ENCODE measurements at regions of chr1 and their contacts with region 1.

Region 1: DNA sequence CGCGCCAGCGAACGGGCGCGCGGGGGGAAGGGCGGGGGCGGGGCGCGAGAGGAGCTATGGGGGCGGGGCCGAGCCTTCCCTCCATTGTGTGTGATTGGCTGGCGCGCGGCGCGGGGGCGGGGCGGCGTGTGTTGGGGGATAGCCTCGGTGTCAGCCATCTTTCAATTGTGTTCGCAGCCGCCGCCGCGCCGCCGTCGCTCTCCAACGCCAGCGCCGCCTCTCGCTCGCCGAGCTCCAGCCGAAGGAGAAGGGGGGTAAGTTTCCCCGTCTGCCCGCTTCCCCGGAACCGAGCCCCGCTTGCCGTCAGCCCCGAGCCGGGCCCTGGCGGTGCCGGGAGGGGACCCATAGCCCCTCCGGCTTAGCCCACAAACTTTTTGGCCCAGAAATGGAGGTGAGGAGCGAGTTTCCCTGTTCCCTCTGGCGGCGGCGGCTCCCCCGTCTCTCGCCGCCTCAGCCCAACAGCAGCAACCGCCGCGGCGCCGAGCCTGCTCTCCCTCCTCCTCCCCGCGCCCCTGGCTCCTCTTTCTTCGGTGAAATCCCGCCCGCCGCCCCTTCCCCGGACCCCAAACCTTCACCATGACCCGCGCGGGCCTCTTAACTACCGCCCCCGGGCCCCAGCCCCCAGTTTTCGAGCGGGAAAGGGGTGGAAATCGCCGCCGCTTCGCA is at the start of gene H3-3A:
- DNase-seq: peak; percentile 99
- H3K4me3 ChIP-seq: peak within 1 kb of the TSS; percentile 86 to 91
- H3K27ac ChIP-seq: peak within 1 kb of the TSS; percentile 98 to 99
- H3K4me1 ChIP-seq: peaks cover 4 to 11% of the 10 kb centered on the region in 2 donors
- H3K27me3 ChIP-seq: no peaks in the 10 kb centered on the region
- CTCF ChIP-seq: peak in 2 of 4 experiments; percentile 32 to 33
- POLR2A ChIP-seq: peak; percentile 95 to 99
- total RNA-seq, gene H3-3A: 261 to 572 (median 348) TPM

Region 2: DNA sequence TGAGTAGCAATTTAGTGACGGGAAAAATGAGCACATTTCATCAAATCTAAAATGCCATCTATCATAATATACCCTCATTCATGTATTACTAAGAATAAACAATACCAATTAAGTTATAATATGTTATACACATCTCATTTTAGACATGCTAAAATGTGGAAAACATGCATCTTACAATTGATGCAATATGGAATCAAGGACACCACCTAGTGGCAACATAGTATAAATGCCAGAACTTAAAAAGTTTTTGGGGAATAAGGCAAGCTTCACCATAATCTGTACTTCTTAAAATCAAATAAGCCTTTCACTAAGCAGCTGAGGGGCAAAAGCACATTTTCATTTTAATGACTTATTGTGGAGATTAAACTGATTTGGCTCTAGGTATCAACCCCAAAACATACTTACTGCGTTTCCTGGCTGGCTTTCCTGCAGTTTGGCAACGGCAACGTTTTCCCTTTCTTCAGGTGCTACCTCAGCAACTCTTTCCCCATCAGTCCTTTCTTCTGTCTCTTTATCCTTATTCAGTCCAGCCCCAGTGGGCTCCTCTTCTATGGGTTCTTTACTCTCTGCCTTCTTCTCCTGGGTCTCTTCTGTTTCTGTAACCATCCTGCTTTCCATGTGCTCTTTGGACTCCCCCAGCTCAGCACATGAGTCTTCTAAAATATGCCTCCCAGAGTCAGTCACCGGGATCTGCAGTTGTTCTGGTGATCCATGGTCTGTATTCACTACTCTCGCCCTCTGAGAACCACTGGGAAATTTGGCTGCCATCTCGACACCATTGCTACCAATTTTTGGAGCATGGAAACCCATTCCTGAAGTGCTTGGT is 75.0 kb before region 1 on chr1:
- intact Hi-C with region 1: no loop called
- DNase-seq: no peak
- H3K4me3 ChIP-seq: no peak overlapping the region
- H3K27ac ChIP-seq: peak overlapping the region in 1 of 2 donors; percentile 26
- H3K4me1 ChIP-seq: no peaks in the 10 kb centered on the region
- H3K27me3 ChIP-seq: no peaks in the 10 kb centered on the region
- CTCF ChIP-seq: peak; percentile 56 to 75 (median 65)
- POLR2A ChIP-seq: no peak

Region 3: DNA sequence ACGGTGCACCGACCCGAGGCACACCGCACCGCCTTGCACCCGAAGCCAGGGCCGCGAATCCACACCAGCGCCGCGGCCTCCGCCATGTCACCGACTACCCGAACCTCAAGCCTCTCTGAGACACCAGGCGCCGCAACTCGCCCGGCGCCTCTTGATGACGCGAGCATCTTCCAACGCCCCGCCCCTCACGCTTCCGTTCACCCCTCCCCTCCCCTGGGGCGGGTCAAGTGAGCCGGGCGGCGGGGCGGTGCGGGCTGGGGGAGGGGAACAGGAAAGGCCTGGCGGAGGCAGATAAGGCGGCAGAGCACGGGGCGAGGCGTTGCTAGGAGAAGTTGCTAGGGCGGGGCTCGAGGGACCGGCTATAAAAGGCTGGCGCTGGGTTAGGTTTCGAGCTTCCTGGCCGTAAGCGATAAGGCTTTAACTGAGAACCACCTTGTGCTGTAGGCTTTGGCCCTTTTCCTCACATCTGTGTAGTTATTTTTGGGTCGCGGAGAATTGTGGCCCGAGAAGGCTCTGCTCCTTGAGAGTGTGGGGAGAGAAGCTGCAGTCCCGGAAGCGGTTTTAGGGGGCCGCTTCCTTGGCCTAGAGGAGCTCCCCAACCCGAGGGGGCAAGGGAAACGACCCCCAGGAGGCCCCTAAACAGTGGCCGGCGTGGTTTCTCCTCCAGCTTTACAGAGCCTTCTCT is 63.3 kb before region 1 on chr1 and contains the start of gene SDE2:
- intact Hi-C with region 1: loop called (anchors 5 kb)
- DNase-seq: peak; percentile 100
- H3K4me3 ChIP-seq: peak within 1 kb of the TSS; percentile 58 to 66
- H3K27ac ChIP-seq: peak within 1 kb of the TSS; percentile 93 to 96
- H3K4me1 ChIP-seq: peaks cover 5 to 11% of the 10 kb centered on the region in 2 donors
- H3K27me3 ChIP-seq: no peaks in the 10 kb centered on the region
- CTCF ChIP-seq: peak in 1 of 4 experiments; percentile 25
- POLR2A ChIP-seq: peak; percentile 68 to 80
- total RNA-seq, gene SDE2: 12.3 to 41.7 (median 17.2) TPM

Region 4: DNA sequence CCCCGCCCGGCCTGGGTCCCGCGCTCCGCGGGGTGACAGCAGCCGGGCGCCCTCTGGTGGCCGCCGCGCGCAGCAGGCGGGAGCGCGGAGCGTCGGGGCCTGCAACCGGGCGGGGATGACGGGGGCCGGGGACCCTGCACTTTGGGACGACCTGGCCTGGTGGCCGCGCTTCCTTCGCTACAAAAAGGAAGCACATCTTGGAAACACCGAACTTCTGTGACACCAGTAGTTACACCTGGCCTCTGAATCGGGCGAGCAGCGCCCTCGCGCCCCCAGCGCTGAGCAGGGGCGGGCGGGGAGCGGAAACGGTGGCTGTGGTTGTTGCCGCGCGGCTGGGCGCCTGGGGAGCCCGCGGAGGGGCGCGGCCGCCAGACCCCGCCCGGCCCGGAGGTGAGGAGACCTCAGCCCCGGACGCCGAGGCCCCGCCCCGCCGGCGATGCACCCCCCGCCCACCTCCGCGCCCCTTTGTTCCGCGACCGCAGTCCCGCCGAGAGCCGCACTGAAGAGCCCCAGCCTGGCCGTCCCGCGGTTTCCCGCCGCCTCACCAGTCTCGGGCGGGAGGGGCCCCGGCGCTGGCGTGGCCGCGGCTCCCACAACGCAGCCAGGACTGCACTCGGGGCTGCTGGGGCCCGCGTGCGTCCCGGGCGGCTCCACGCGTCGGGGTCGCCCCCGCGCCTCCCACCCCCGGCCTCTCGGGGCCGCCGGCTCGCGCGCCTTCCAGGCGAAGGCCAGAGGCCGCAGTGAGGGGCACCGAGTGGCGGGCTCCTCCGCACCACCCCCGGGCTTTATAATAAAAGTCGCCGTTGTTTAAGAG is 59.1 kb after region 1 on chr1:
- intact Hi-C with region 1: loop called (anchors 5 kb)
- DNase-seq: peak; percentile 48 to 66
- H3K4me3 ChIP-seq: peak overlapping the region; percentile 21 to 67
- H3K27ac ChIP-seq: peak overlapping the region; percentile 52 to 84
- H3K4me1 ChIP-seq: no peaks in the 10 kb centered on the region
- H3K27me3 ChIP-seq: no peaks in the 10 kb centered on the region
- CTCF ChIP-seq: peak; percentile 40 to 97 (median 96)
- POLR2A ChIP-seq: peak in 1 of 2 donors; percentile 41